ENCODE measurements at regions of chr19 and their contacts with region 1.

Region 1: DNA sequence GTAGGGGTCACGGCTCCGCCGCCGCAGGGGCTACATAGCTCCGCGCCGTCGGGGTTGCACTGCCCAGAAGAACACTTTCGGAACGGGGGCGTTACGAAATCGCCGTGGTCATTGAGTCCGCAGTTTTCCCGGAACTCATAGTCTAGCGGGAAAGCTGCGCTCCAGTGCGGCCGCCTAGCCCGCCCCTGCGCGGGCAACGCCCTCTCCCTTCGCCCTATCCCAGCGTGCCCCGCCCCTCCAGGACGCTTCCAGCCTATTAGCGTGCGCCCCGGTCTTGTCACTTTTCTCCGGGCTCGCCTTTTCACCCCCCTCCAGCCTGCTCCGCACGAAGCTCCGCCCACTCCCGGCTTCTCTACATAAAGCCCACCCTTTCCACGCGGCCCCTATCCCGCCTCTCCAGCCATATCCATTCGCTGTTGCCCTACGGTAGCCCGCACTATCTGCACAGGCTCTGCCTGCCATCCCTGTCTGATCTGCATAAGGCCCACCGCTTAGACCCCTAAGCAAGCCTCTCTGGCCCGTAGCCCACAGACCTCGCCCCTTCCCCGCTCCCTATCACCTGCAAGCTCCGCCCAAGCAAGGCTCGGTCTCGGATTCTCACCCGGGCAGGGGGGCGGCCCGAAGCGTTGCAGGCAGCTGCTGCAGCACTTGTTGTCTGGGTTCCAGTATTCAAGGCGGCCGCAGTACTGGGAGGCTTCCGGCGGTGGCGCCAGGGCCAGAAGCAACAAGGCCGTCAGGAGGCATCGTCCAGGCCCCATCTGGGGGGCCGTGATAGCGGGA is 1.6 kb downstream of the IGFLR1 start:
- DNase-seq: peak; percentile 90 to 97 (median 91)
- H3K4me3 ChIP-seq: peak overlapping the region; percentile 83 to 88
- H3K4me3 Mint-ChIP-seq: peak overlapping the region; percentile 88 to 98 (median 90)
- H3K27ac ChIP-seq: peak overlapping the region; percentile 77
- H3K27ac Mint-ChIP-seq: peak overlapping the region; percentile 93 to 99 (median 94)
- H3K4me1 ChIP-seq: peaks cover 59% of the 10 kb centered on the region
- H3K4me1 Mint-ChIP-seq: peaks cover 17 to 65% (median 42%) of the 10 kb centered on the region in 4 donors
- H3K27me3 ChIP-seq: no peaks in the 10 kb centered on the region
- H3K27me3 Mint-ChIP-seq: no peaks in the 10 kb centered on the region

Region 2: DNA sequence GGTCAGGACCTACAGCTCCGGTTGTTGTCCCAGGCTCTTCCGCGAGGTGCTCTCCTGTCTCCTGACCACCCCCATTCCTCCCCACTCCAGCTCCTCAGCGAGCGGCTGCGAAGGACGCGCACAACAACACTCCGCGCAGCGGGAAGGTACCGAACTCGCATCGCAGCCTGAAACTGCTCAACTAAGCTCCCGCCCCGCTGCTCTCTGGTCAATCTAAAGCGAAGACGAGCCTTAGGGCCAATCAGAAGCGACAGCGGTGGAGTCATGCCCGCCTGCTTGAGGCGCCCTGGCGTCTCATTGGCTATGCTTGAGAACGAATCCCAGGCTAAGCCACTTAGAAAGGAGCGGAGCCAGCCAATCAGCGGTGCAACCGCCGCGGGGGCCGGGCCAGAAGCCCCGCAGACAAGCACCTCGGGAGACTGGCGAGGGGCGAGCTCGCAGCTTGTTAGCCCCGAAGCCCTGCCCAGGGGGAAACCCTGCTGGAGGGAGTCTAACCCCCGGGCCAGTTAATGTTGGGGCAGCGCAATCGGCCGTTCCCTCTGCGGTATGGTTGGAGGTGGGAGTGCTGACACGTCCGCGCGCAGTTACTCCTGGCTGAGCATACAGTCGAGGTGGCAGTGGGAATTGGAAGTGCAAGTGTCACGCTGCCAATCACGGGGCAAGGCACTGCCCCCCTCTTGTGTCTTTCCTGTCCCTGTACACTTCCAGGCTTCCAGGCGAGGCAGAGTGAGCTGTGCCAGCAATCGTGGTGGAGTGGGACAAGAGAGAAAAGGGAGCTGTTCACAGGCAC is 38.2 kb before region 1 on chr19:
- CTCF ChIA-PET with region 1: interaction called, 4 read pairs
- POLR2A ChIA-PET with region 1: interaction called, 26 read pairs
- intact Hi-C with region 1: loop called (anchors 1 kb)
- DNase-seq: peak; percentile 88 to 97 (median 91)
- H3K4me3 ChIP-seq: peak overlapping the region; percentile 92 to 95
- H3K4me3 Mint-ChIP-seq: peak overlapping the region; percentile 90 to 100 (median 98)
- H3K27ac ChIP-seq: peak overlapping the region; percentile 39
- H3K27ac Mint-ChIP-seq: peak overlapping the region; percentile 90 to 98 (median 95)
- H3K4me1 ChIP-seq: peaks cover 11% of the 10 kb centered on the region
- H3K4me1 Mint-ChIP-seq: peaks cover 3 to 9% (median 7%) of the 10 kb centered on the region in 4 donors
- H3K27me3 ChIP-seq: no peaks in the 10 kb centered on the region
- H3K27me3 Mint-ChIP-seq: peaks cover 2 to 5% of the 10 kb centered on the region in 2 donors

Region 3: GRCh38 chr19:35775298-35776110 is 34.9 kb after region 1 on chr19 and contains the start of gene ARHGAP33:
- CTCF ChIA-PET with region 1: interaction called, 4 read pairs
- POLR2A ChIA-PET with region 1: interaction called, 3 read pairs
- intact Hi-C with region 1: loop called (anchors 1 kb)
- DNase-seq: peak; percentile 97 to 98 (median 98)
- H3K4me3 ChIP-seq: peak within 1 kb of the TSS; percentile 21 to 65
- H3K4me3 Mint-ChIP-seq: peak within 1 kb of the TSS; percentile 79 to 95 (median 87)
- H3K27ac ChIP-seq: no peak within 1 kb of the TSS
- H3K27ac Mint-ChIP-seq: peak within 1 kb of the TSS; percentile 46 to 87 (median 72)
- H3K4me1 ChIP-seq: peaks cover 15% of the 10 kb centered on the region
- H3K4me1 Mint-ChIP-seq: peaks cover 11 to 37% (median 20%) of the 10 kb centered on the region in 4 donors
- H3K27me3 ChIP-seq: no peaks in the 10 kb centered on the region
- H3K27me3 Mint-ChIP-seq: no peaks in the 10 kb centered on the region
- total RNA-seq, gene ARHGAP33: 15.8 to 19.4 TPM

Region 4: GRCh38 chr19:35812220-35813042 is 71.8 kb after region 1 on chr19 and contains the start of gene PRODH2:
- CTCF ChIA-PET with region 1: no interaction called
- POLR2A ChIA-PET with region 1: no interaction called
- intact Hi-C with region 1: no loop called
- DNase-seq: no peak
- H3K4me3 ChIP-seq: no peak within 1 kb of the TSS
- H3K4me3 Mint-ChIP-seq: no peak within 1 kb of the TSS
- H3K27ac ChIP-seq: no peak within 1 kb of the TSS
- H3K27ac Mint-ChIP-seq: peak within 1 kb of the TSS in 1 of 7 donors; percentile 35
- H3K4me1 ChIP-seq: no peaks in the 10 kb centered on the region
- H3K4me1 Mint-ChIP-seq: no peaks in the 10 kb centered on the region
- H3K27me3 ChIP-seq: no peaks in the 10 kb centered on the region
- H3K27me3 Mint-ChIP-seq: peaks cover 14% of the 10 kb centered on the region in 2 donors
- total RNA-seq, gene PRODH2: not detected

Measured in CD4-positive, alpha-beta memory T cell (primary cell).